Naive thymus-derived CD4-positive, alpha-beta T cell (primary cell): ENCODE measurements at regions of chr19 and their contacts with region 1.

Region 1: GRCh38 chr19:29263305-29264135 is 50.6 kb upstream of the UQCRFS1 start:
- DNase-seq: peak; percentile 4 to 51 (median 26)
- ATAC-seq: peak; percentile 82
- H3K4me3 ChIP-seq: no peak overlapping the region
- H3K4me3 Mint-ChIP-seq: no peak overlapping the region
- H3K27ac ChIP-seq: no peak overlapping the region
- H3K27ac Mint-ChIP-seq: no peak overlapping the region
- H3K4me1 ChIP-seq: no peaks in the 10 kb centered on the region
- H3K4me1 Mint-ChIP-seq: peaks cover 0 to 9% (median 3%) of the 10 kb centered on the region in 7 donors
- H3K27me3 ChIP-seq: no peaks in the 10 kb centered on the region
- H3K27me3 Mint-ChIP-seq: peaks cover 0 to 38% (median 23%) of the 10 kb centered on the region in 5 donors

Region 2: DNA sequence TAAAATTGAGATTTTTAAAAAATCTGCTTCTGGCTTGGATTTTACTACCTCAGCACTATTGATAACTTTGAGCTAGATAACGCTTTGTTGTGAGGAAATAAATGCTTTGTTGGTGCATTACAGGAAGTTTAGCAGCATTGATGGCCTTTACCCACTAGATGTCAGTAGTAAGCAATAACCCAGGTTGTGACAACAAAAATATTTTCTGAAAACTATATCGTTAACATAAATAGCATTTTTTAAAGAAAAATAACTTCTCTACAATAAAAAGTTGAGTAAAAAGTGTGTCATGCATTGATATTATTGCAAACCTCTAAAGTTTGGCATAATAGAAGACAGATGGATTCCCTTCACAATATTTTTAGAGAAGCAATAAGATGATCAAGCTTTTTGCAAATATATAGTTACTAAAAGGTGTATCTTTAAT is 1297.1 kb before region 1 on chr19:
- CTCF ChIA-PET with region 1: interaction called, 3 read pairs
- POLR2A ChIA-PET with region 1: no interaction called
- intact Hi-C with region 1: loop called in 1 of 2 experiments (anchors 5 kb)
- DNase-seq: peak in 1 of 9 donors; percentile 1
- ATAC-seq: no peak
- H3K4me3 ChIP-seq: no peak overlapping the region
- H3K4me3 Mint-ChIP-seq: no peak overlapping the region
- H3K27ac ChIP-seq: no peak overlapping the region
- H3K27ac Mint-ChIP-seq: no peak overlapping the region
- H3K4me1 ChIP-seq: no peaks in the 10 kb centered on the region
- H3K4me1 Mint-ChIP-seq: no peaks in the 10 kb centered on the region
- H3K27me3 ChIP-seq: no peaks in the 10 kb centered on the region
- H3K27me3 Mint-ChIP-seq: peaks cover 0 to 14% (median 2%) of the 10 kb centered on the region in 5 donors

Region 3: DNA sequence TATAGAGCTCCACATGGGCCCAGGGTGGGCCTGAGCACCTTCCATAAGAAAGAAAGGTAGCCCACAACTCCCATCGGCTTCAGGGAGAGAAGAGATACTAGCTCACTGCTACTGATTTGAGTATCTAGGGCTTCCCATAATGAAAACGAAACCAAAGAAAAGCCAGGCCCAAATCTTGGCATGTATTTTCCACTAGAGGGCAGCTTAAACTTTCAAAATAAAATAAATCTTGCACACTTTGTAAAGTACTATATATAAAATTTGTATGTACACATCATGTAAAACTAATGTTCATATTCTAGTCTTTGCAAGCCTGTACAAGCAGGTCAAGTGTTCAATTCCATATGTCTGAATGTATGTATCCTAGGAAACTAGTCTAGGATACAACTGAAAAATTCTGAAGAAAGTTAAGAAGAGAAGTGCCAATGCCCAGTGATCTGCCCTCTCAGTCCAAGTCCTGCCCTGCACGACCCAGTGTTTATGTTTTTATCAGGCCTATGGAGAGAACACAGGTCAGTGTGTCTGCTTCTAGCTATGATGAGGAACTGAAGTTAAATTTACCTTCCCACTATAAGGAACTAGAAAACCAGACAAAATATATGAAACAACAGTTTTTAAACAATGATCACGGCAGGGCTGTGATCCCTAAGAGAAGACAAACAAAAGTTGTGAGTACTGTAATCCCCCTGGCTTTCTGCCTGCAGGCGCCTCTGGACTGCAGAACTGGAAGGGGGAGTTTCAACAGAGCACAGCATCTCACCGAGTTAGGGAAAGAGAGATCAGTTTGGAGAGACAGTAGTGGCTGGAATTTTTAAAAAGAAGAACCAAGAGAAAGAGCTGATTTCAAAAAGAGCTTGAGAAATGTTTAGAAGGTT is 526.3 kb before region 1 on chr19:
- CTCF ChIA-PET with region 1: interaction called, 7 read pairs
- POLR2A ChIA-PET with region 1: no interaction called
- intact Hi-C with region 1: loop called in 1 of 2 experiments (anchors 1 kb)
- DNase-seq: peak in 5 of 9 donors; percentile 8 to 36 (median 25)
- ATAC-seq: no peak
- H3K4me3 ChIP-seq: no peak overlapping the region
- H3K4me3 Mint-ChIP-seq: peak overlapping the region in 7 of 10 donors; percentile 11 to 58 (median 19)
- H3K27ac ChIP-seq: no peak overlapping the region
- H3K27ac Mint-ChIP-seq: peak overlapping the region in 7 of 9 donors; percentile 1 to 65 (median 22)
- H3K4me1 ChIP-seq: peaks cover 0 to 5% of the 10 kb centered on the region in 2 donors
- H3K4me1 Mint-ChIP-seq: peaks cover 2 to 10% (median 5%) of the 10 kb centered on the region in 7 donors
- H3K27me3 ChIP-seq: no peaks in the 10 kb centered on the region
- H3K27me3 Mint-ChIP-seq: peaks cover 0 to 13% (median 8%) of the 10 kb centered on the region in 5 donors